Transverse colon (tissue), 4 donors: ENCODE measurements at regions of chr12 and their contacts with region 1.

Region 1: GRCh38 chr12:20259786-20260185 is 108.6 kb upstream of the PDE3A start:
- DNase-seq: no peak
- H3K4me3 ChIP-seq: no peak overlapping the region
- H3K27ac ChIP-seq: no peak overlapping the region
- H3K4me1 ChIP-seq: no peaks in the 10 kb centered on the region
- H3K27me3 ChIP-seq: no peaks in the 10 kb centered on the region
- CTCF ChIP-seq: no peak
- EP300 ChIP-seq: no peak
- POLR2A ChIP-seq: no peak

Region 2: DNA sequence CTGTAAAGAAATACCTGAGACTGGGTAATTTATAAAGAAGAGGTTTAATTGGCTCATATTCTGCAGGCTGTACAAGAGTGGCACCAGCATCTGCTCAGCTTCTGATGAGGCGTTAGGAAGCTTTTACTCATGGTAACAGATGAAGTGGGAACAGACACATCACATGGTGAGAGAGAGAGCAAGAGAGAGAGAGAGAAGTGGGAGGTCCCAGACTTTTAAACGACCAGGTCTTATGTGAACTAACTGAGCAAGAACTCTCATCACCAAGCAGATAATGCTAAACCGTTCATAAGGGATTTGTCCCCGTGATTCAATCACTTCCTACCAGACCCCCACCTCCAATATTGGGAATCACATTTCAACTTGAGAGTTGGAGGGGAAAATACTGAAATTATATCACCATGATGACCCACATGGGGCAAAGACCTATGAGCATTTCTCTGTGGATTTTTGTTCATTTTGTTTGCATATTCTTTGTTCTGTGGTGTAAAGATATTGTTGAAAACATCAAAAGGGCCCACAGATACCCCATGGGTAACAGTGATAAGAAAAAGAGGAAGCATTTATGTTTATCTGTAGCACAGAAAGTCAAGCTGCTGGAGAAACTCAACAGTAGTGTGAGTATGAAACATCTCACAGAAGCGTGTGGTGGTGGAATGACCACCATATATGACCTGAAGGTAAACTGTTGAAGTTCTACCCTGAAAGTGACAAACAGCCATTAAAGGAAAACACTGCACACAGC is 26.7 kb before region 1 on chr12:
- in situ Hi-C with region 1: no loop called
- intact Hi-C with region 1: loop called (anchors 1 kb)
- DNase-seq: no peak
- H3K4me3 ChIP-seq: no peak overlapping the region
- H3K27ac ChIP-seq: no peak overlapping the region
- H3K4me1 ChIP-seq: no peaks in the 10 kb centered on the region
- H3K27me3 ChIP-seq: no peaks in the 10 kb centered on the region
- CTCF ChIP-seq: no peak
- EP300 ChIP-seq: no peak
- POLR2A ChIP-seq: no peak